HepG2 (cell line): ENCODE measurements at regions of chr4 and their contacts with region 1.

Region 1: GRCh38 chr4:52712172-52712990 is 38.8 kb downstream of the ERVMER34-1 start:
- DNase-seq: peak; percentile 92
- ATAC-seq: peak; percentile 96
- H3K4me3 ChIP-seq: peak overlapping the region; percentile 76 to 83 (median 83)
- H3K27ac ChIP-seq: peak overlapping the region; percentile 91
- H3K4me1 ChIP-seq: peaks cover 45% of the 10 kb centered on the region
- H3K27me3 ChIP-seq: peaks cover 0 to 1% of the 10 kb centered on the region in 2 experiments; a peak in 1 of 5 replicates
- CTCF ChIP-seq: no peak
- EP300 ChIP-seq: no peak; a peak in 1 of 4 replicates
- POLR2A ChIP-seq: peak; percentile 92 to 93
- RAD21 ChIP-seq: peak; percentile 66; the same call in 1 of the 2 replicates

Region 2: GRCh38 chr4:52606726-52607125 is 105.7 kb before region 1 on chr4:
- CTCF ChIA-PET with region 1: no interaction called
- POLR2A ChIA-PET with region 1: no interaction called
- in situ Hi-C with region 1: no loop called
- intact Hi-C with region 1: no loop called
- DNase-seq: no peak
- ATAC-seq: no peak
- H3K4me3 ChIP-seq: no peak overlapping the region
- H3K27ac ChIP-seq: no peak overlapping the region
- H3K4me1 ChIP-seq: no peaks in the 10 kb centered on the region
- H3K27me3 ChIP-seq: no peaks in the 10 kb centered on the region
- CTCF ChIP-seq: no peak
- EP300 ChIP-seq: no peak
- POLR2A ChIP-seq: no peak
- RAD21 ChIP-seq: no peak

Region 3: GRCh38 chr4:52659001-52659721 is 53.2 kb before region 1 on chr4 and contains the start of gene USP46:
- CTCF ChIA-PET with region 1: no interaction called
- POLR2A ChIA-PET with region 1: interaction called, 74 read pairs
- in situ Hi-C with region 1: loop called (anchors 5 kb)
- intact Hi-C with region 1: loop called (anchors 2 kb)
- DNase-seq: peak; percentile 44
- ATAC-seq: peak; percentile 92
- H3K4me3 ChIP-seq: peak within 1 kb of the TSS; percentile 69 to 87 (median 79)
- H3K27ac ChIP-seq: peak within 1 kb of the TSS; percentile 78
- H3K4me1 ChIP-seq: peaks cover 43% of the 10 kb centered on the region
- H3K27me3 ChIP-seq: no peaks in the 10 kb centered on the region; a peak in 1 of 5 replicates
- CTCF ChIP-seq: 0 out of 2 replicates have a peak, but pooled peaks have one; percentile 9
- EP300 ChIP-seq: no peak
- POLR2A ChIP-seq: peak; percentile 51 to 55
- RAD21 ChIP-seq: no peak
- total RNA-seq, gene USP46: 17.4 and 26.4 TPM in 2 replicates

Region 4: DNA sequence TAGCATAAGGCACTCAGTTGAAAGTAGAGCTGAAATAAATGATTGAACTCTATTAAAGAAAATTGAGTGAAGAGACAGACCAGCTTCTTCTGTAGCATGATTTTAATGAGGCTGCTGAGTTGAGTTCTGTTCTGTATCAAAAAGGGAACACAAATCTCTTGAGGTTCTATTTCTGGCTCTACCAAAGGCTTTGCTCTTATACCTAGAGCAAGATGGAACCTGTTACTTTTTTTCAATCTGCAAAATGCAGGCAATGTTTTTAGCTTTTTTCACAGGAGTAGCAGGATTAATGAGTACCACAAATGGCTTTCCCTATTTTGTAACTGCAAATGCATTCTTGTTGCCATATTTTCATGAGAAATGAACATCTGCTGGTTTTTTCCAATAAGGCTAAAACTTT is 43.0 kb after region 1 on chr4:
- CTCF ChIA-PET with region 1: no interaction called
- POLR2A ChIA-PET with region 1: no interaction called
- in situ Hi-C with region 1: no loop called
- intact Hi-C with region 1: no loop called
- DNase-seq: no peak
- ATAC-seq: no peak
- H3K4me3 ChIP-seq: no peak overlapping the region
- H3K27ac ChIP-seq: no peak overlapping the region
- H3K4me1 ChIP-seq: 0 out of 2 replicates have a peak, but pooled peaks cover 6% of the 10 kb centered on the region
- H3K27me3 ChIP-seq: peaks cover 3 to 12% of the 10 kb centered on the region in 2 experiments; a peak in 4 of 5 replicates
- CTCF ChIP-seq: no peak
- EP300 ChIP-seq: no peak
- POLR2A ChIP-seq: no peak
- RAD21 ChIP-seq: no peak